AG04450 (cell line): ENCODE measurements at regions of chr12 and their contacts with region 1.

Region 1: GRCh38 chr12:10153271-10154144 is 18.4 kb downstream of the OLR1 start:
- DNase-seq: no peak
- H3K4me3 ChIP-seq: peak overlapping the region; percentile 50
- H3K27ac ChIP-seq: peak overlapping the region; percentile 70
- H3K27me3 ChIP-seq: no peaks in the 10 kb centered on the region
- CTCF ChIP-seq: peak; percentile 78

Region 2: DNA sequence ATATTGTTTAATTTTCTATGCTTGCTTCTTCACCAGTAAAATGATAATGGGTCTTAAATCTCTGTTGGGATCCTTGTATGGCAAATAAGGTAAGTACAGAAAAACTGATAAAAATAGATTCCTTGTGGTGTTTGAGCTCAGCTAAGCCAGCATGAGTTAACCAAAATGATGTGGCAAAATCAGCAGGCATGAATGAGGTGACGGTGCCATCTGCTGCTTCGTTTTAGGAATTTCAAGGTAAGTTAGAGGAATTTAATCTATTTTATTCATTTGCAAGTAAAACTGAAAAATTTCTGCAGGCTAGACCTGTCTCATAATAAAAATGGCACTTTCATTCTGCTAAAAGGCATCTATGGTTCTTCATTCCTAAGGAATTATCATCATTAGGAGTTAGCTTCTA is 13.5 kb before region 1 on chr12:
- CTCF ChIA-PET with region 1: interaction called, 41 read pairs
- POLR2A ChIA-PET with region 1: no interaction called
- DNase-seq: no peak
- H3K4me3 ChIP-seq: no peak overlapping the region
- H3K27ac ChIP-seq: no peak overlapping the region
- H3K27me3 ChIP-seq: no peaks in the 10 kb centered on the region
- CTCF ChIP-seq: peak; percentile 51

Region 3: DNA sequence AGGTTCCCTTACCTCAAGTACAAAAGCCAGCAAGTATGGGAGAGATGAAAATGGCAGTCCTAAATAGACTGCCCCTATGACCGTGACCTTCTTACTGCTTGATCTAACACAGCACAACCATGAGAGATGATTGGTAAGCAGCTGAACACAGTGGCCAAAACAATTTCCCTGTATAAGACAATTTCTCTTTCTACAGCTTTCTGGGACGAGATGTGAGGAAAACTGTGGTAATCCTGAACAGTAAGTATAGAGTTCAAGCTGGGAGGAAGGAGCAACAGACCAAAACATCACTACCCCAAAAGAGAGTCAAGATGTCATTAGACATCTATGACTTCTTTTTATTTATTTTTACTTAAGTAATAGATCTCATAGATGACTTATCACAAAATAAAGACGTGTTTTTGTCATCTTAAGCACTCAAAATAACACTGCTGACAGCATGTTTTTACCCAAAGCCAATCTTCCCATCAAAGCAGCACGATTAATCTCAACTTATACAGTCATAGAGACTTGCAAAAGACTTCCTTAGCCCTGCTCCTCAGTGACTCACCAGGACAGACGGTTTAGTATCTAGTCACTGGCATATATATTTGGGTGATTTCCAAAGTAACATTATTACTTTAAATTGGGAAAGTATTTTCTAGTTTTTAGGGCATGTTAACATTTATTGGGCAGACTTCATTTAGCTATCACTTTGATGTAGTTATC is 29.0 kb after region 1 on chr12:
- CTCF ChIA-PET with region 1: interaction called, 70 read pairs
- POLR2A ChIA-PET with region 1: interaction called, 3 read pairs
- DNase-seq: no peak
- H3K4me3 ChIP-seq: no peak overlapping the region
- H3K27ac ChIP-seq: peak overlapping the region; percentile 78
- H3K27me3 ChIP-seq: no peaks in the 10 kb centered on the region
- CTCF ChIP-seq: no peak

Region 4: DNA sequence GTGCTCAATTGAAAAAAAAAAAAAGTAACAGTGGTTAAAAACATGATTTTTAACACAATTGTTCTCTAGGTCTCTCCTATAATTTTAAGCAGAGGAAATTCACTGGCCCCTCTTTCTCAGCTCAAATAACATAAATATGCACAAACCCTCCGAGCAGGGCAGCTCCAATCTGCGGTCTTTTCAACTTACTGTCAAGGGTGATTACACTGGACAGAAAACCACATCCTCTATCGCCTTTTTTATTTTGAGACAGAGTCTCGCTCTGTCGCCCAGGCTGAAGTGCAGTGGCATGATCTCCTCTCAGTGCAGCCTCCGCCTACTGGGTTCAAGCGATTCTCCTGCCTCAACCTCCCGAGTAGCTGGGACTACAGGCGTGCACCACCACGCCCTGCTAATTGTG is 42.7 kb after region 1 on chr12:
- CTCF ChIA-PET with region 1: interaction called, 70 read pairs
- POLR2A ChIA-PET with region 1: interaction called, 10 read pairs
- DNase-seq: no peak
- H3K4me3 ChIP-seq: no peak overlapping the region
- H3K27ac ChIP-seq: no peak overlapping the region
- H3K27me3 ChIP-seq: no peaks in the 10 kb centered on the region
- CTCF ChIP-seq: no peak

Region 5: DNA sequence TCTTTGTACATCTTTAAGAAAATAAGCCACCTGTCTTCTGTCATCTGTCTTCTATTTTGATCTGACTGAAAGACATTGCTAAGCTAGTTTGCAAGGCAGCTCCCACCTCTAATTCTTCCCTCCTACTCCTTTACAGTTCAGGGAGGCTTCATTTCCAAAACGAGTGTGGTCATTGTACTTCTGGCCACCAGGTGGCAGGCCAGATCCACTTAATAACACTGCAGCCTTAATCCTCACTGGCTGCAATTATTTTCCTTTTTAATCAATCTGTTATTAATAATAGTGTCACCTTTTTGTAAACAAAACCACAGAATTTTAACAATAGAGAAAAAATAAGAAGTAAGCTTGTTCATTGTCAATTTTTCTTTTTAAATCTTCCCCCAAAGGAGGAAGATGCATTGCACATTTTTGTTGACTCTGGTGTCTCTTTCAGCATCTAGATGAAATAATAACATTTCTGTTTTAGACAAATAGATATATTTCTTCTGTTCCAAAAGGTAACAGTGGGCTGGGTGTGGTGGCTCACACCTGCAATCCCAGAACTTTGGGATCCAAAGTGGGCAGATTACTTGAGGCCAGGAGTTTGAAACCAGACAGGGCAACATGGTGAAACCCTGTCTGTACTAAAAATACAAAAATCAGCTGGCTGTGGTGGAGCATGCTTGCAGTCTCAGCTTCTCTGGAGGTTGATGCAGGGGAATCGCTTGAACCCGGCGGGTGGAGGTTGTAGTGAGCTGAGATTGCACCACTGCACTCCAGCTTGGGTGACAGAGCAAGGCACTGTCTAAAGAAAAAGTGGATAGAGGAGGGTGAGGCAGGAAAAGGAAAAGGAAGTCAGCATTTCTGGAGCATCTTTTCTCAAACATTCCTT is 82.5 kb after region 1 on chr12:
- CTCF ChIA-PET with region 1: interaction called, 25 read pairs
- POLR2A ChIA-PET with region 1: no interaction called
- DNase-seq: no peak
- H3K4me3 ChIP-seq: no peak overlapping the region
- H3K27ac ChIP-seq: no peak overlapping the region
- H3K27me3 ChIP-seq: no peaks in the 10 kb centered on the region
- CTCF ChIP-seq: peak; percentile 83